Activated B cell treated with CpG ODN at 0.5 μM for 24 hours (primary cell): ENCODE measurements at regions of chr17 and their contacts with region 1.

Region 1: GRCh38 chr17:27332485-27333409 is 38.8 kb downstream of the WSB1 start:
- DNase-seq: peak; percentile 83
- ATAC-seq: peak; percentile 88
- H3K4me3 Mint-ChIP-seq: peak overlapping the region; percentile 86
- H3K27ac Mint-ChIP-seq: peak overlapping the region; percentile 87
- H3K4me1 Mint-ChIP-seq: peaks cover 36% of the 10 kb centered on the region
- H3K27me3 Mint-ChIP-seq: no peaks in the 10 kb centered on the region
- CTCF ChIP-seq: no peak

Region 2: GRCh38 chr17:27199948-27200347 is 132.8 kb before region 1 on chr17:
- CTCF ChIA-PET with region 1: interaction called, 30 read pairs
- POLR2A ChIA-PET with region 1: interaction called, 4 read pairs
- intact Hi-C with region 1: loop called (anchors 5 kb)
- DNase-seq: no peak
- ATAC-seq: no peak
- H3K4me3 Mint-ChIP-seq: no peak overlapping the region
- H3K27ac Mint-ChIP-seq: no peak overlapping the region
- H3K4me1 Mint-ChIP-seq: no peaks in the 10 kb centered on the region
- H3K27me3 Mint-ChIP-seq: no peaks in the 10 kb centered on the region
- CTCF ChIP-seq: no peak

Region 3: GRCh38 chr17:27345141-27345904 is 12.6 kb after region 1 on chr17:
- CTCF ChIA-PET with region 1: interaction called, 10 read pairs
- POLR2A ChIA-PET with region 1: interaction called, 4 read pairs
- intact Hi-C with region 1: no loop called
- DNase-seq: no peak
- ATAC-seq: no peak
- H3K4me3 Mint-ChIP-seq: peak overlapping the region; percentile 38
- H3K27ac Mint-ChIP-seq: peak overlapping the region; percentile 41
- H3K4me1 Mint-ChIP-seq: peaks cover 26% of the 10 kb centered on the region
- H3K27me3 Mint-ChIP-seq: no peaks in the 10 kb centered on the region
- CTCF ChIP-seq: no peak